ENCODE measurements at regions of chr1 and their contacts with region 1.

Region 1: GRCh38 chr1:214566158-214567104 is 15.0 kb upstream of the PTPN14 start:
- DNase-seq: no peak
- ATAC-seq: peak; percentile 67
- H3K4me3 ChIP-seq: no peak overlapping the region
- H3K27ac ChIP-seq: no peak overlapping the region
- H3K4me1 ChIP-seq: no peaks in the 10 kb centered on the region
- H3K27me3 ChIP-seq: no peaks in the 10 kb centered on the region
- CTCF ChIP-seq: no peak
- EP300 ChIP-seq: no peak
- POLR2A ChIP-seq: no peak
- RAD21 ChIP-seq: no peak

Region 2: DNA sequence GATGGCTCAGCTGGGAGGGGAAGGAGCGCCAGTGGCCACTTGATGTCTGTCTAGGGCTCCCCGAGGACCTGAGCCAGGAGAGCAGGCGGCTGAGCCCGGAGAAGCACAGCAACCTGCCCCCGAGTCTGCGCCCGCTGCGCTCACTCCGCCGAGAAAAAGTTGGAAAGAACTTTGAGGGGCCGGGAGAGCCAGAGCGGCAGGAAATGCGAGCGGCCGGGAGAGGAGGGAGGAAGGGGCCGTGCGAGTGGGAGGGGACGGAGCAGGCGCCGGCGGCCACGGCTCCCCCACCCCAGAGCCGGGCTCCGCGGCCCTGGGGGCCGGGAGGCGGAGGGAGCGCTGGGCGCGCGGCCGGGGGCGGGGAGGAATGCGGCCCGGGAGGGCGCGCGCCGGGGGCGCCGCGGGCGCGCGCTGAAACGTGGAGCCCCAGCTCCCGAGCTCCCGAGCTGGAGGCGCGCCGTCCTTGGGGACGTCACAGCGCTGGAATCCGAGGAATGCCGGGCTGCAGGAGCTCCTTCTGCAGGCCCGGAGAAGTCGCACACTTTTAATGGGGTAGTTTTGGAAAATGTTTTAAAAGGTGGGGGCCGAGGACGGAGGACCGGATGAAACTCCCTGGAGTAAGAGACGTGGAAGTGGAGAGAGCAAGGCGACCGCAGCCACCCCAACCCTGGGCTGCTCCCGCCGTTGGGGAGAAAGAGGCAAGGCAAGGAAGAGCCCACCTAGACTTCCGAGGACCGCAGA is 14.8 kb before region 1 on chr1 and contains the start of gene PTPN14:
- CTCF ChIA-PET with region 1: interaction called, 6 read pairs
- POLR2A ChIA-PET with region 1: interaction called, 10 read pairs
- RAD21 ChIA-PET with region 1: interaction called, 14 read pairs
- SMC1A ChIA-PET with region 1: interaction called, 64 read pairs
- in situ Hi-C with region 1: no loop called
- intact Hi-C with region 1: no loop called
- DNase-seq: no peak
- ATAC-seq: peak; percentile 44
- H3K4me3 ChIP-seq: no peak within 1 kb of the TSS
- H3K27ac ChIP-seq: no peak within 1 kb of the TSS
- H3K4me1 ChIP-seq: no peaks in the 10 kb centered on the region
- H3K27me3 ChIP-seq: peaks cover 3 to 7% of the 10 kb centered on the region in 2 experiments; a peak in 3 of 4 replicates
- CTCF ChIP-seq: no peak
- EP300 ChIP-seq: no peak
- POLR2A ChIP-seq: no peak
- RAD21 ChIP-seq: no peak
- polyA plus RNA-seq, gene PTPN14: 0.05 to 0.14 TPM

Region 3: GRCh38 chr1:214648801-214649200 is 82.4 kb after region 1 on chr1:
- CTCF ChIA-PET with region 1: no interaction called
- POLR2A ChIA-PET with region 1: no interaction called
- RAD21 ChIA-PET with region 1: no interaction called
- SMC1A ChIA-PET with region 1: no interaction called
- in situ Hi-C with region 1: no loop called
- intact Hi-C with region 1: no loop called
- DNase-seq: no peak
- ATAC-seq: no peak
- H3K4me3 ChIP-seq: no peak overlapping the region
- H3K27ac ChIP-seq: no peak overlapping the region
- H3K4me1 ChIP-seq: no peaks in the 10 kb centered on the region
- H3K27me3 ChIP-seq: no peaks in the 10 kb centered on the region
- CTCF ChIP-seq: no peak
- EP300 ChIP-seq: no peak
- POLR2A ChIP-seq: no peak
- RAD21 ChIP-seq: no peak

Region 4: GRCh38 chr1:214707306-214708087 is 141.1 kb after region 1 on chr1:
- CTCF ChIA-PET with region 1: no interaction called
- POLR2A ChIA-PET with region 1: no interaction called
- RAD21 ChIA-PET with region 1: no interaction called
- SMC1A ChIA-PET with region 1: no interaction called
- in situ Hi-C with region 1: no loop called
- intact Hi-C with region 1: no loop called
- DNase-seq: no peak
- ATAC-seq: no peak
- H3K4me3 ChIP-seq: no peak overlapping the region
- H3K27ac ChIP-seq: no peak overlapping the region
- H3K4me1 ChIP-seq: no peaks in the 10 kb centered on the region
- H3K27me3 ChIP-seq: no peaks in the 10 kb centered on the region
- CTCF ChIP-seq: no peak
- EP300 ChIP-seq: no peak
- POLR2A ChIP-seq: no peak
- RAD21 ChIP-seq: no peak

Measured in GM12878 (cell line).